Naive thymus-derived CD8-positive, alpha-beta T cell (primary cell): ENCODE measurements at regions of chr19 and their contacts with region 1.

Region 1: GRCh38 chr19:42132851-42133528 is 744 bp upstream of the POU2F2 start:
- DNase-seq: peak; percentile 72 to 91 (median 88)
- ATAC-seq: peak; percentile 59 to 65
- H3K4me3 Mint-ChIP-seq: peak overlapping the region; percentile 82 to 96 (median 90)
- H3K27ac Mint-ChIP-seq: peak overlapping the region; percentile 75 to 98 (median 92)
- H3K4me1 Mint-ChIP-seq: peaks cover 50 to 79% (median 78%) of the 10 kb centered on the region in 4 donors
- H3K27me3 Mint-ChIP-seq: no peaks in the 10 kb centered on the region

Region 2: GRCh38 chr19:42066075-42066754 is 66.8 kb before region 1 on chr19:
- POLR2A ChIA-PET with region 1: no interaction called
- DNase-seq: no peak
- ATAC-seq: no peak
- H3K4me3 Mint-ChIP-seq: no peak overlapping the region
- H3K27ac Mint-ChIP-seq: no peak overlapping the region
- H3K4me1 Mint-ChIP-seq: peaks cover 0 to 3% (median 0%) of the 10 kb centered on the region in 4 donors
- H3K27me3 Mint-ChIP-seq: peaks cover 0 to 21% (median 13%) of the 10 kb centered on the region in 5 donors

Region 3: GRCh38 chr19:42083537-42083936 is 49.5 kb before region 1 on chr19:
- POLR2A ChIA-PET with region 1: no interaction called
- DNase-seq: no peak
- ATAC-seq: no peak
- H3K4me3 Mint-ChIP-seq: no peak overlapping the region
- H3K27ac Mint-ChIP-seq: peak overlapping the region in 4 of 10 donors; percentile 15 to 36 (median 24)
- H3K4me1 Mint-ChIP-seq: peaks cover 9 to 28% (median 15%) of the 10 kb centered on the region in 4 donors
- H3K27me3 Mint-ChIP-seq: no peaks in the 10 kb centered on the region

Region 4: DNA sequence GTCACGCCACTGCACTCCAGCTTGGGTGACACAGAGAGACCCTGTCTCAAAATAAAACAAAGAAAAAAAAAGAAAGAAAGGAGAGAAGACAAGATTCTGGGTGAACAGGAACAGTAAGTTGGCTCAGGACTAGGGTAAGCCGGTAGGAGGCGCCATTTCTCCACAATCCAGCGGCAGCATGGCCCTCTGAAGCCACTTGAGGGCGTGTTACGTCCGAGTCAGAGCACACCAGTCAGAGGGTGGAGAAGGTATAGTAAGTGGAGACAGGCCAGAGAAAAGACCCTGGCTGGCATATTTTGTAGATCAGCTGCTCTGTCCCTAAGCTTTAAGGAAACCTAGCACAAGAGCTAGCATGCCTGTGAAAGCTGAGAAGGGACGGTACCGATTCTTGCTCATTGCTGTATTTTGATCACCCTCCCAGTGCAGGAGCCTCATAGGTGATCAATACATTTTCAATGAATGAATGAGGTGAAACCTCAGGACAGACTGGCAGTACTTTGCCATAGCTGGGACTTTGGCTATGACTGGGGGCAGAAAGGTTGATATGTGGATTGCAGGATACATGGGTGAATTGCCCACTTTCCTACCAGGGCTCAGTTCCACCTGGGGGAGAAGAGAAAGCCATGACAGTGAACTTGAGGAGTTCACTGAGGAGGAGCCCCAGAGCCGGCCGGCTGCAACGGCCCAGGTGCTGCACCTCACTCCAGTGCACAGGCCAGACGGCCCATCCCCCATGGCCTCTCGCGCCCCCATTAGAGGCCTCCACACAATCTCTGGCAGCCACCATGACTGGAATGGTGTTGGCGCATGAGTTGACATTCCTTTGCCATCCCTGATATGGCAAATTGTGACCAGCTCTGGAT is 24.2 kb before region 1 on chr19:
- POLR2A ChIA-PET with region 1: interaction called, 21 read pairs
- DNase-seq: peak; percentile 79 to 94 (median 86)
- ATAC-seq: peak; percentile 98 to 99
- H3K4me3 Mint-ChIP-seq: no peak overlapping the region
- H3K27ac Mint-ChIP-seq: peak overlapping the region in 9 of 10 donors; percentile 1 to 87 (median 58)
- H3K4me1 Mint-ChIP-seq: peaks cover 16 to 33% (median 24%) of the 10 kb centered on the region in 4 donors
- H3K27me3 Mint-ChIP-seq: no peaks in the 10 kb centered on the region

Region 5: DNA sequence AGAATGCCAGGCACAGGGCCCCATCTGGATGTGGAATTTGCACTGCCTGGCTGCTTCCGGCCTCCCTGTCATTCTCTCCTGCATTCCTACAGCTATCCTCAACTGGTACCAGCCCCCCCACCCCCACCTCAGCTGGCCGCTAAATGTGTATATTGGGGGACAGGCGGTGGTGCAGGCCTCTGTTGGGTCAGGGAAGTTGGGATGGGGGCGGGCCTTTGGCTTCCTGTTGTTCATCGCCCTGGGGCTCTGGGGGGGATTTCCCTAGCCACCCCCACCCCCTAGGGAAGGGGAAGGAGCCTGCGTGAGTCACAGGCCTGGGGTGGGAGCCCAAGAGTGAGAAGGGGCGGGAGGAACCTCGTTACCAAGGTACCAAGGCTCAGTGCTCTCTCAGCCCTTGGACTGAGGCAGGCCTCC is 11.3 kb before region 1 on chr19:
- POLR2A ChIA-PET with region 1: interaction called, 40 read pairs
- DNase-seq: peak in 9 of 10 donors; percentile 20 to 86 (median 52)
- ATAC-seq: peak; percentile 86 to 87
- H3K4me3 Mint-ChIP-seq: peak overlapping the region; percentile 62 to 93 (median 79)
- H3K27ac Mint-ChIP-seq: peak overlapping the region; percentile 82 to 97 (median 92)
- H3K4me1 Mint-ChIP-seq: peaks cover 31 to 82% (median 53%) of the 10 kb centered on the region in 4 donors
- H3K27me3 Mint-ChIP-seq: no peaks in the 10 kb centered on the region

Region 6: GRCh38 chr19:42199440-42200115 is 66.6 kb after region 1 on chr19:
- POLR2A ChIA-PET with region 1: interaction called, 12 read pairs
- DNase-seq: peak in 8 of 10 donors; percentile 23 to 77 (median 47)
- ATAC-seq: peak; percentile 50 to 53
- H3K4me3 Mint-ChIP-seq: peak overlapping the region; percentile 73 to 89 (median 86)
- H3K27ac Mint-ChIP-seq: peak overlapping the region; percentile 88 to 97 (median 92)
- H3K4me1 Mint-ChIP-seq: peaks cover 58 to 90% (median 83%) of the 10 kb centered on the region in 4 donors
- H3K27me3 Mint-ChIP-seq: no peaks in the 10 kb centered on the region

Region 7: DNA sequence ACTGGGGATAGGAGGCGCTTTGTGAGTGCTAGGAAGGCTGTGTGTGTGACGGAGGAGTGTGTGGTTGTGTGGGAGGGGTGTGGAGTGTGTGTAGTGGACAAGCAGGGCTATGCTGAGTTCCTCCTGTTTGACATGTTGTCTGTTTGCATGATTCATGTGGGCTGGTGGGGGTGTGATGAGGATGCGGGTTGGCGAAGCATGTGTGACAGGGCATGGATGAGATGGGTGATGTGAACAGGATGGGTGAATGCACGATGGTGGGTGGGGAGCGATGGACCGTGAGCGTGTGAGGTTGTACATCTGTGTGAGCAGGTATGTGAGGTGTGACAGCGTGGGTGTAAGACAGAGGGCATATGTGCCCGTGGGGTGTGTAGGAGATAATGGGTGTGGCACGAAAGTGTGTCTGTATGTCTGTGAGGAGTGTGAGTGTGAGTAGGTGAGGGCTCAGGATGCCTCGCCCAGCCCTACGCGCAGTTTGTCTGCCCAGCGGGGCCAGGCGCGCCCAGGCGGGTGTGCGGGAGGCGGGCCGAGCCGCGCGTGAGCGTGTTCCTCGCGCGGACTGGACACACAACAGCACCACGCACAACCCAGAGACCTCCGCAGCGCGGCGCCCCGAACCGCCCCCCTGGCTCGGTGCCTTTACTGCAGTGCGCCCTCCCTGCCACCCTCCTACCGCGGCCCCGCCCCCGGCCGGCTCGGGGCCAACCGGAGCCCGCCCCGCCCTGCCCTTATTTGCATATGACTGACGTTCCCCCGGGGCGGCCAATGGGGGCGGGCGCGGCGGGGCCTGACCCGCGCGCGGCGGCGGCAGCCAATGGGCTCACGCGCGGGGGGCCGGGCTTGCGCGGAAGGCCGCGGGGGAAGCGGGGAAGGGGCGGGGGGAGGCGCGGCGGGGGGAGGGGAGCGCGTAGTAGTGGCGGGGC is 150.4 kb after region 1 on chr19:
- POLR2A ChIA-PET with region 1: interaction called, 10 read pairs
- DNase-seq: peak; percentile 91 to 99 (median 96)
- ATAC-seq: peak; percentile 61 to 71
- H3K4me3 Mint-ChIP-seq: no peak overlapping the region
- H3K27ac Mint-ChIP-seq: no peak overlapping the region
- H3K4me1 Mint-ChIP-seq: peaks cover 33 to 46% (median 35%) of the 10 kb centered on the region in 4 donors
- H3K27me3 Mint-ChIP-seq: no peaks in the 10 kb centered on the region